ENCODE measurements at regions of chr7 and their contacts with region 1.

Region 1: GRCh38 chr7:7424151-7424873 is 111.4 kb downstream of the COL28A1 start:
- DNase-seq: peak; percentile 66
- ATAC-seq: peak; percentile 96
- H3K4me3 ChIP-seq: peak overlapping the region; percentile 23 to 42
- H3K27ac ChIP-seq: no peak overlapping the region
- H3K4me1 ChIP-seq: peaks cover 0 to 3% of the 10 kb centered on the region in 2 experiments; a peak in 2 of 4 replicates
- H3K27me3 ChIP-seq: no peaks in the 10 kb centered on the region
- CTCF ChIP-seq: peak; percentile 85 to 91 (median 89)
- POLR2A ChIP-seq: no peak
- RAD21 ChIP-seq: peak; percentile 99

Region 2: DNA sequence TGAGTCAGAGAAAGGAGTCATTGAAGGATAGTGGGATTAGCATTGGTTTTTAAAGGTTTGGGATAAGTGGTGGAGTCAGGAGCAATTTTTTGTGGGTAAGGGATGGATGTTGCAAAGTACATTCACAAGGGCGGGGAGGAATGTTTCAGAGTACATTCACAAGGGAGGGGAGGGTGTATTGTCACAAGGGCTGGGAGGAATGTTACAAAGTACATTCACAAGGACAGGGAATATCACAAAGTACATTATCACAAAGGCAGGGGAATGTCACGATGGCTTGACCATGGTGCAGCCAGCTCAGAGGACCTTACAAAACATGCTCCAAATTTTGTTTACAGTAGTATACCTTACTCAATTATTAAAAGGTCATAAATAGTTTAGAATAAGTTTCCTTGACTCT is 211.7 kb before region 1 on chr7:
- CTCF ChIA-PET with region 1: no interaction called
- POLR2A ChIA-PET with region 1: no interaction called
- RAD21 ChIA-PET with region 1: no interaction called
- intact Hi-C with region 1: no loop called
- DNase-seq: no peak
- ATAC-seq: no peak
- H3K4me3 ChIP-seq: no peak overlapping the region
- H3K27ac ChIP-seq: no peak overlapping the region
- H3K4me1 ChIP-seq: no peaks in the 10 kb centered on the region
- H3K27me3 ChIP-seq: no peaks in the 10 kb centered on the region
- CTCF ChIP-seq: no peak
- POLR2A ChIP-seq: no peak
- RAD21 ChIP-seq: no peak

Region 3: DNA sequence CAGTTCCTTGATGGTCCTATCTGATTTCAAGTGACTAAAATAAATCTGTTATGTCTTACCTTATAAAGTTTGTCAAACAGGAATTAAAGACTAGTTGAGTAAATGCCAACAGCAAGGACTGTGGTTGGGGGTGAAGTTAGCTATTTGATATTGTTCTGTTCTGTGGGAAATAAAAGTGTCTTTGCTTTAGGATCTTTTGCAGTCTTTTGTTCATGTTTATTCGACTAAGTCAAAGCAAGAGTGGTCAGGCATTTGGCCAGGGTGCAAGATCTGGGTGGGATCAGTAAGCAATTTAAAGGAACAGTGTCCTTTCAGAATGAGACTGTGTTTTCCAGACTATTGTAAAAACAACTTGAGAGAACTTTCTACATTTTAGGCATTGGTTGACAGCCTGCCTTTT is 111.4 kb after region 1 on chr7 and contains the start of gene COL28A1:
- CTCF ChIA-PET with region 1: interaction called, 11 read pairs
- POLR2A ChIA-PET with region 1: no interaction called
- RAD21 ChIA-PET with region 1: interaction called, 3 to 4 read pairs
- intact Hi-C with region 1: loop called (anchors 2 kb)
- DNase-seq: no peak
- ATAC-seq: no peak
- H3K4me3 ChIP-seq: no peak within 1 kb of the TSS
- H3K27ac ChIP-seq: no peak within 1 kb of the TSS
- H3K4me1 ChIP-seq: no peaks in the 10 kb centered on the region
- H3K27me3 ChIP-seq: no peaks in the 10 kb centered on the region
- CTCF ChIP-seq: no peak
- POLR2A ChIP-seq: no peak
- RAD21 ChIP-seq: no peak
- total RNA-seq, gene COL28A1: 0.12 TPM

Region 4: GRCh38 chr7:8607708-8608107 is 1183.4 kb after region 1 on chr7:
- CTCF ChIA-PET with region 1: no interaction called
- POLR2A ChIA-PET with region 1: no interaction called
- RAD21 ChIA-PET with region 1: no interaction called
- intact Hi-C with region 1: no loop called
- DNase-seq: no peak
- ATAC-seq: no peak
- H3K4me3 ChIP-seq: no peak overlapping the region
- H3K27ac ChIP-seq: no peak overlapping the region
- H3K4me1 ChIP-seq: no peaks in the 10 kb centered on the region
- H3K27me3 ChIP-seq: no peaks in the 10 kb centered on the region
- CTCF ChIP-seq: no peak
- POLR2A ChIP-seq: no peak
- RAD21 ChIP-seq: no peak